ENCODE measurements at regions of chr9 and their contacts with region 1.

Region 1: GRCh38 chr9:5879419-5880181 is 11.1 kb upstream of the MLANA start:
- DNase-seq: peak; percentile 88
- ATAC-seq: peak; percentile 94
- H3K4me3 ChIP-seq: peak overlapping the region; percentile 25 to 44
- H3K27ac ChIP-seq: peak overlapping the region; percentile 57; the same call in 1 of the 2 replicates
- H3K4me1 ChIP-seq: peaks cover 12 to 43% of the 10 kb centered on the region in 2 experiments; a peak in 3 of 4 replicates
- H3K27me3 ChIP-seq: no peaks in the 10 kb centered on the region
- CTCF ChIP-seq: no peak
- POLR2A ChIP-seq: no peak
- RAD21 ChIP-seq: 0 out of 2 replicates have a peak, but pooled peaks have one; percentile 13

Region 2: DNA sequence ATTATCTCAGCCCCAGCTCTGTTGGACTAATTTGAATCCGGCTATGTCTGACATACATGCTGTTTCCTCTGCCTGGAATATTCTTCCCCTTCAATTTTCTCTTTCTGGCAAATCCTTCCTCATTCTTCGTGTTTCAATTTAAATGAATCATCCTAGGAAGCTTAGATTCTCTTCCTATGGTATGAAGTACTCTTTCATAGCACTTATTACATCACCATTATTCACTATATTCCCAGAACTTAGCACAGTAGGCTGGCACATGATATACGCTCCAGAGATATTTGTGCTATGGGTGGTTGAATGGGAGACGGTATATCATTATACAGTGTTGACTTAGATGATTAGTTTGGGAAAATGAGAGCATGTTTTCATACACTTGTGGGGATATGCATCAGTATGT is 985.5 kb before region 1 on chr9:
- CTCF ChIA-PET with region 1: no interaction called
- POLR2A ChIA-PET with region 1: no interaction called
- RAD21 ChIA-PET with region 1: no interaction called
- intact Hi-C with region 1: no loop called
- DNase-seq: no peak
- ATAC-seq: no peak
- H3K4me3 ChIP-seq: no peak overlapping the region
- H3K27ac ChIP-seq: no peak overlapping the region
- H3K4me1 ChIP-seq: peaks cover 0 to 4% of the 10 kb centered on the region in 2 experiments; a peak in 1 of 4 replicates
- H3K27me3 ChIP-seq: no peaks in the 10 kb centered on the region
- CTCF ChIP-seq: no peak
- POLR2A ChIP-seq: no peak
- RAD21 ChIP-seq: no peak

Region 3: DNA sequence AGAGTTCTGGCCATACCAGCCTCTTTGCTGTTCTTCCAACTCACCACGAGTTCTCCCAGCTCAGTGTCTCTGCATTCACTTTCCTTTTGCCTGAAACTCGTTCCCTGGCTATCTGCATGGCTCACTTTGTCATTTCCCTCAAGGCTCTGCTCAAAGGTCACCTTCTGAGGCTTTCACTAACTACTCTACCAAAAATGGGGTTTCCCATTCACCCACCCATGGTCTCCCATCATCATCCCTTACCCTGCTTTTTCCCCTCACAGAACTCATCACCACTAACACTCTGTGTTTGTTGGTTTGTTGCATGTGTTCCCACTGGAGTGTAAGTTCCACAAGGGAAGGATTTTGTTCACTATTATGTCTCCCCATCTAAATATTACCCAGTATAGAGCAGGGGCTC is 458.4 kb before region 1 on chr9:
- CTCF ChIA-PET with region 1: no interaction called
- POLR2A ChIA-PET with region 1: no interaction called
- RAD21 ChIA-PET with region 1: no interaction called
- intact Hi-C with region 1: no loop called
- DNase-seq: no peak
- ATAC-seq: no peak
- H3K4me3 ChIP-seq: no peak overlapping the region
- H3K27ac ChIP-seq: no peak overlapping the region
- H3K4me1 ChIP-seq: no peaks in the 10 kb centered on the region
- H3K27me3 ChIP-seq: no peaks in the 10 kb centered on the region
- CTCF ChIP-seq: no peak
- POLR2A ChIP-seq: no peak
- RAD21 ChIP-seq: no peak

Region 4: GRCh38 chr9:5459289-5459829 is 420.2 kb before region 1 on chr9:
- CTCF ChIA-PET with region 1: no interaction called
- POLR2A ChIA-PET with region 1: no interaction called
- RAD21 ChIA-PET with region 1: no interaction called
- intact Hi-C with region 1: no loop called
- DNase-seq: no peak
- ATAC-seq: no peak
- H3K4me3 ChIP-seq: no peak overlapping the region
- H3K27ac ChIP-seq: no peak overlapping the region
- H3K4me1 ChIP-seq: peaks cover 0 to 11% of the 10 kb centered on the region in 2 experiments; a peak in 2 of 4 replicates
- H3K27me3 ChIP-seq: no peaks in the 10 kb centered on the region
- CTCF ChIP-seq: no peak
- POLR2A ChIP-seq: no peak
- RAD21 ChIP-seq: no peak

Region 5: GRCh38 chr9:5869315-5870019 is 10.1 kb before region 1 on chr9:
- CTCF ChIA-PET with region 1: interaction called, 21 read pairs
- POLR2A ChIA-PET with region 1: interaction called, 6 read pairs
- RAD21 ChIA-PET with region 1: no interaction called
- intact Hi-C with region 1: no loop called
- DNase-seq: peak; percentile 8
- ATAC-seq: peak; percentile 91
- H3K4me3 ChIP-seq: no peak overlapping the region
- H3K27ac ChIP-seq: no peak overlapping the region
- H3K4me1 ChIP-seq: peaks cover 6 to 11% of the 10 kb centered on the region in 2 experiments; a peak in 2 of 4 replicates
- H3K27me3 ChIP-seq: no peaks in the 10 kb centered on the region
- CTCF ChIP-seq: peak; percentile 36 to 88 (median 81); a peak in 5 of 6 replicates
- POLR2A ChIP-seq: no peak
- RAD21 ChIP-seq: peak; percentile 58

Region 6: GRCh38 chr9:6197330-6197729 is 317.7 kb after region 1 on chr9:
- CTCF ChIA-PET with region 1: no interaction called
- POLR2A ChIA-PET with region 1: no interaction called
- RAD21 ChIA-PET with region 1: no interaction called
- intact Hi-C with region 1: no loop called
- DNase-seq: peak; percentile 12
- ATAC-seq: peak; percentile 62
- H3K4me3 ChIP-seq: no peak overlapping the region
- H3K27ac ChIP-seq: no peak overlapping the region
- H3K4me1 ChIP-seq: no peaks in the 10 kb centered on the region
- H3K27me3 ChIP-seq: no peaks in the 10 kb centered on the region
- CTCF ChIP-seq: peak; percentile 15 to 50 (median 32); a peak in 4 of 6 replicates
- POLR2A ChIP-seq: no peak
- RAD21 ChIP-seq: peak; percentile 53